HCT116 (cell line): ENCODE measurements at regions of chr15 and their contacts with region 1.

Region 1: DNA sequence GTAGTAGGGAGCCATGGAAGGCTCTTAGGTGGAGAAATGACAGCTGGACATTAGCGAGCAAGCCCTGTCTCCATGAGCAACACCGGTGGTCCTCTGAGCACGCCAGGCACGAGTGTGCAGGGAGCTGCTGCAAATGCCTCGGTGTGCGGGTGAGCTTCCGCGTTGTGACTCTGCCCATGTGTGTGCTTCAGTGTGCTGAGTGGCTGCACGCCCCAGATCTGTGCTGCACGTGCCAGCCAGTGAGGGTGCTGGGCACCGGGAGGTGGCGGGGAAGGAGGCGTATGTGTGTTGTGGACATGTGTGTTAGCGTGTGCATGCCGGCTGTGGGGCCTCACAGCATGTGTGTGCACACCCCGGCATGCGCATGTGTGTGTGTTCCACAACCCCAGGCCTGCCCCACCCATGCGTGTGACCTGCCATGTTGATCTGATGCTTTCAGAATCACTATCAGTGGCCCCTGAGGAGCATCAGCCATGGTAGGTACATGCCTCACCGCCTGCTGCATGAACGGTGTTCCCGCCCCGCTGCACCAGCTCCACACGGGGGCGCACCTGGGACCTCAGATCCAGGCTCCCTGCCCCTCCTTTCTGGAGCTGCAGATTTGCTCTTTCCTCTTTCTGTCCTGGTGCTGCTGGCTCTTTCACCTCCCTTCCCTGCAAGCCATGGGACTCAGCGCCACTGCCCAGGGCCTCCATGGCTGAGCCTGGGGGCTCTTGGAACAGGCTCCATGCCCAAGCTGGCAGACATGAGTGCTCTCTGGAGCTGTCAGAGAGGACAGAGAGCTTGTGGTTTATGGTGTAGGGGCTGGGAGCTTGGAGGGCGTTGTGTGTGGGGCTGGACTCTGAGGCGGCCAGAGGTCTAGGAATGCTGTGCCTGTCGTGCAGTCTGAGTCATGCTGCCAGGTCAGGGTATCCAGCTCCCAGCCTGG is 169.4 kb downstream of the TBC1D2B start:
- DNase-seq: peak; percentile 36
- ATAC-seq: peak; percentile 77
- H3K4me3 ChIP-seq: no peak overlapping the region
- H3K27ac ChIP-seq: peak overlapping the region; percentile 10; the same call in 1 of the 2 replicates
- H3K4me1 ChIP-seq: peaks cover 0 to 19% of the 10 kb centered on the region in 2 experiments; a peak in 2 of 4 replicates
- H3K27me3 ChIP-seq: no peaks in the 10 kb centered on the region
- CTCF ChIP-seq: peak; percentile 31 to 69 (median 53); a peak in 4 of 6 replicates
- POLR2A ChIP-seq: no peak
- RAD21 ChIP-seq: no peak

Region 2: DNA sequence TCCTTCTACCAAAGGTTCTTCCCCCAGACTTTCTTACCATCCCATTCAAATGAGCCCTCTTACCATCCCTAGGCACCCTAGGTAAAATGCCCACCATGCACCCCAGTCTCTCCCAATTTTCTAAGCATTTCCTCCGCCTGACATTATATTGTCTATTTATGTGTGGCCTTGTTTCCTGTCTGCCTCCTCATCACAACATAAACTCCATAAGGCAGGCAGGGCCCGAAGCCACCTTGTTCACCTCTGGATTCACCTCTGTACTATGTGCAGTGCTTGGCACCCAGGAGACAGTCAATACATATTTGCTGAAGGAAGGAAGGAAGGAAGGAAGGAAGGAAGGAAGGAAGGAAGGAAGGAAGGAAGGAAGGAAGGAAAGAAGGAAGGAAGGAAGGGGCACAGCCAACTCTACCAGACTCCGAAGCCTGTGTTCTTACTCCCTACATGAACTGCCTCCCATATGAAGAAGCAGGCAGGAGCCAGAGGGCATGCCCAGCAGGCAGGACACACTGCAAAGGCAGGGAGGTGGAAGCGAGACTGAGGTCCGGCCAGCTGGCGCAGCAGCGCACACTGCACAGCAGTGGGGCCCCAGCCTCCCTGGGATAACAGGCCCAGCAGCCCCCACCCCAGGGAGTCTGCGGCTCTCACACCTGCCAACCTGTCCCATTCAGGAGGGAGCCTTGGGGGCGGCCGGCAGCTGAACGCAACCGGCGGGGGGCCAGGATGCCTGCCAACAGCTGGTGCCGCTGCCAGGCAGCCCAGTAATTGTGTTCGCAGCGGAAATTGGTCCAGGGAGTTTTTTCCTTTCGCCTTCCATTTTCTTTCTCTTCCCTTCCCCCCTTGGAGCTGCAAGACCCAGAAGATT is 169.4 kb before region 1 on chr15:
- CTCF ChIA-PET with region 1: no interaction called
- POLR2A ChIA-PET with region 1: no interaction called
- RAD21 ChIA-PET with region 1: no interaction called
- intact Hi-C with region 1: no loop called
- DNase-seq: no peak
- ATAC-seq: no peak
- H3K4me3 ChIP-seq: no peak overlapping the region
- H3K27ac ChIP-seq: no peak overlapping the region
- H3K4me1 ChIP-seq: no peaks in the 10 kb centered on the region
- H3K27me3 ChIP-seq: no peaks in the 10 kb centered on the region
- CTCF ChIP-seq: no peak
- POLR2A ChIP-seq: no peak
- RAD21 ChIP-seq: no peak

Region 3: DNA sequence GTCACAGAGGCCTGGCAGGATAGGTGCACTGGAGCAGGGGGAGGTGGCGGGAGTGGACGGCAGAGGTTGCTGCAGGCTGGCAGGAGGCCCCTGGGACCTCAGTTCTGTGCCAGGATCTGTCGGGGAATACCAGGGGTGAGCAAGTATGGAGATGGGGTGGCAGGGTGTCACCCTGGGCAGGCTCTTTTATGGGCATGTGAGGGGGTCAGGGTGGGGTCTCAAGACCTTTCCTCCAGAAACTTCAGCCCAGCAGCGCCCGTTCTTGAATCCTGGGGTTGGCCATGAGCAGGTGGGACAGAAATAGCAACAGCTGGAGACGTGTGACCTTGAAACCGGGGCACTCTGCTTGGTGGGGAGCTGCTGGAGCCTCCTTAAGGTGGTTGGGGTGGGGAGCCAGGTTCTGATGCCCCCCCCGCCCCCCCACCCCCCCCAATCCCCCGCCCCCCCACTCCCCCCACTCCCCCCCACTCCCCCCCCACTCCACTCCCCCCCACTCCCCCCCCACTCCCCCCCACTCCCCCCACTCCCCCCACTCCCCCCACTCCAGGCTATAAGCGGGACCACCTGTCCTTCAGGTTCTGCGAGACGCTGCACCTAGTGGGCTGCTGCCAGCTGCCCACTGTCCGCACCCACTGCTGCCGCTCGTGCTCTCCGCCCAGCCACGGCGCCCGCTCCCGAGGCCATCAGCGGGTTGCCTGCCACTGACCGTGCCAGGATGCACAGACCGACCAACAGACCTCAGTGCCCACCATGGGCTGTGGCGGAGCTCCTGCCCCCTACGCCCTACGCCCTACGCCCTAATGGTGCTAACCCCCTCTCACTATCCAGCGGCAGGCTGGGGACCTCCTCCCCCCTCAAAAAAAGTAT is 84.5 kb after region 1 on chr15:
- CTCF ChIA-PET with region 1: no interaction called
- POLR2A ChIA-PET with region 1: no interaction called
- RAD21 ChIA-PET with region 1: no interaction called
- intact Hi-C with region 1: loop called (anchors 1 kb)
- DNase-seq: no peak
- ATAC-seq: no peak
- H3K4me3 ChIP-seq: no peak overlapping the region
- H3K27ac ChIP-seq: no peak overlapping the region
- H3K4me1 ChIP-seq: peaks cover 11 to 20% of the 10 kb centered on the region in 2 experiments
- H3K27me3 ChIP-seq: no peaks in the 10 kb centered on the region
- CTCF ChIP-seq: no peak
- POLR2A ChIP-seq: no peak
- RAD21 ChIP-seq: no peak

Region 4: GRCh38 chr15:78739996-78740903 is 832.2 kb after region 1 on chr15:
- CTCF ChIA-PET with region 1: interaction called, 10 read pairs
- POLR2A ChIA-PET with region 1: interaction called, 4 read pairs
- RAD21 ChIA-PET with region 1: no interaction called
- intact Hi-C with region 1: loop called (anchors 5 kb)
- DNase-seq: peak; percentile 45
- ATAC-seq: peak; percentile 80
- H3K4me3 ChIP-seq: no peak overlapping the region
- H3K27ac ChIP-seq: no peak overlapping the region
- H3K4me1 ChIP-seq: peaks cover 0 to 13% of the 10 kb centered on the region in 2 experiments; a peak in 2 of 4 replicates
- H3K27me3 ChIP-seq: no peaks in the 10 kb centered on the region
- CTCF ChIP-seq: peak; percentile 52 to 85 (median 75); a peak in 5 of 6 replicates
- POLR2A ChIP-seq: no peak
- RAD21 ChIP-seq: peak; percentile 54